ENCODE measurements at regions of chr5 and their contacts with region 1.

Region 1: DNA sequence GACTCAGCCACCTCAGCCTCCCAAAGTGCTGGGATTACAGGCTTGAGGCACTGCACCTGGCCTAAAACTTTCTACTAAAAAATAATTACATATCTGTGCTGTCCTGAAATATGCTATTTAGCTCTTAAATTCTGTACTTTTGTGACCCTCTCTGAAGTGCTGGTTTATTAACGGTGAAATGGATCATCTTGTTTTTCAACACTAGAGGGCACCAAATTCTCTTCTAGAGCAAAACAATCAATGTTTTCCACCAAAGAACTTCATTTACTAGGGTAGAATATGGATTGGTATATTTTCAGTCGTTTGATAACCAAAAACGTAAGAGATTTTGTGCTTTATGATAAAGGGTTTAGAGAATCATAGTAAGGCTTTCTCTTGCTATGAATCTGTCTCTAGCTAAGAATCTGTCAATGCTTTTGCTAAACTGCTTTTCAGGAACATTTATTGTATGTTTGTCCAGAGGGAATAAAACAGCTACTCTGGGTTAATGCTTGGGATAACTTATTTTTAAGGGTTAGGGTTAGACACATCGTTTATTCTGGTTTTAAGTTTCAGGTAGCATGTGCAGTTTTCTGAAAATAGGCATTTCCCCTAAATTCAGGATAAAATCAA is 63.6 kb downstream of the RNF180 start:
- DNase-seq: peak; percentile 56
- CTCF ChIP-seq: peak; percentile 66

Region 2: GRCh38 chr5:64190562-64191306 is 38.5 kb before region 1 on chr5:
- CTCF ChIA-PET with region 1: no interaction called
- POLR2A ChIA-PET with region 1: no interaction called
- DNase-seq: no peak
- CTCF ChIP-seq: no peak

Region 3: GRCh38 chr5:64213531-64213930 is 15.7 kb before region 1 on chr5:
- CTCF ChIA-PET with region 1: interaction called, 19 read pairs
- POLR2A ChIA-PET with region 1: no interaction called
- DNase-seq: no peak
- CTCF ChIP-seq: no peak

Region 4: GRCh38 chr5:64364426-64364825 is 135.2 kb after region 1 on chr5:
- CTCF ChIA-PET with region 1: no interaction called
- POLR2A ChIA-PET with region 1: no interaction called
- DNase-seq: no peak
- CTCF ChIP-seq: no peak